ENCODE measurements at regions of chr12 and their contacts with region 1.

Region 1: GRCh38 chr12:101759396-101760047 is 20.3 kb upstream of the SYCP3 start:
- DNase-seq: no peak
- H3K4me3 ChIP-seq: no peak overlapping the region
- H3K27ac ChIP-seq: no peak overlapping the region
- H3K4me1 ChIP-seq: peaks cover 0 to 49% (median 11%) of the 10 kb centered on the region in 6 donors
- H3K27me3 ChIP-seq: no peaks in the 10 kb centered on the region
- CTCF ChIP-seq: peak; percentile 51 to 78 (median 72)
- POLR2A ChIP-seq: no peak

Region 2: DNA sequence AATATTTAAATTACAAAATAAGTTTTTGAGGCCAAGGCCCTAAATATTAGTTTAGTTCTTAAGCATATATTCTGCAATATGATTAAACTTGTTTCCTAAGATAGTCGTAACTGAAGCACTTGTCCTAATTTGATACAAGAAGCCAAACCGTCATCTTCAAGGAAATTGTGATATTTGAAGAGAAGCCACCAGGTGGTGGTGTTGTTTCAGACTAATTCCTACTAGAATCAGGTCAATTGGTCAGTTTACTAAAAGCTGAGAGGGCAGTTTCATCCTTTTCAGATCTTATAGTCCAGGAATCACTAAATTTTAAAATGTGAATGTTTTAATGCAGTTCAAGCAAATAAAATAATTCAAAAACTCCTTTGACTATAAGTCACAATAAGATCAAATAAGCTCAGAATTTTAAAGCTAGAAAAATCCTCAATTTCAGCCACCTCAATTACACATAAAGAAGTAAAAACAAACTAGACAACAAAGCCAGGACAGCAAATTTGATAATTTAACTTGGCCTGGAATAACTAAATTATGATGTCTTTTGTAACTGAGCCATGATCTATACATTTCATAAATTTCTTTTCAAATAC is 344.9 kb before region 1 on chr12:
- intact Hi-C with region 1: loop called (anchors 10 kb)
- DNase-seq: no peak
- H3K4me3 ChIP-seq: no peak overlapping the region
- H3K27ac ChIP-seq: no peak overlapping the region
- H3K4me1 ChIP-seq: peaks cover 0 to 4% (median 0%) of the 10 kb centered on the region in 6 donors
- H3K27me3 ChIP-seq: no peaks in the 10 kb centered on the region
- CTCF ChIP-seq: peak in 9 of 11 experiments; percentile 27 to 64 (median 53)
- POLR2A ChIP-seq: no peak

Region 3: DNA sequence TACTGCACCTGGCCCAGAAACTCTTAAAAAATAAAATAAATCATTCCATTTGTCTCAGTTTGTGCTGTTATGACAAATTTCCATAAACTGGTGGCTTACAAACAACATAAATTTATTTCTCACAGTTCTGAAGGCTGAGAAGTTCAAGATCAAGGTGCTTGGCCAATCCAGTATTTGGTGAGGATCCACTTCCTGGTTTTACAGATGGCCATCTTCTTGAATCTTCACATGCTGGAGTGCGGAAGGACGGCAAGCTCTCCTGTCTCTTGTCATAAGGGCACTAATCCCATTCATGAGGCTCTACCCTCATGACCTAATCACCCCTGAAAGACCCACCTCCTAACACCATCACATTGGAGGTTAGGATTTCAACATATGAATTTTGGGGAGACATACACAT is 194.6 kb before region 1 on chr12:
- intact Hi-C with region 1: loop called (anchors 10 kb)
- DNase-seq: no peak
- H3K4me3 ChIP-seq: no peak overlapping the region
- H3K27ac ChIP-seq: no peak overlapping the region
- H3K4me1 ChIP-seq: peaks cover 0 to 3% (median under 1%) of the 10 kb centered on the region in 6 donors
- H3K27me3 ChIP-seq: no peaks in the 10 kb centered on the region
- CTCF ChIP-seq: no peak
- POLR2A ChIP-seq: no peak

Measured in spleen (tissue), 13 donors.